Activated B cell treated with CpG ODN at 0.5 μM for 24 hours (primary cell): ENCODE measurements at regions of chr10 and their contacts with region 1.

Region 1: GRCh38 chr10:71835671-71836595 is 15.1 kb downstream of the PSAP start:
- DNase-seq: peak; percentile 84
- ATAC-seq: peak; percentile 92
- H3K4me3 Mint-ChIP-seq: peak overlapping the region; percentile 79
- H3K27ac Mint-ChIP-seq: peak overlapping the region; percentile 95
- H3K4me1 Mint-ChIP-seq: peaks cover 88% of the 10 kb centered on the region
- H3K27me3 Mint-ChIP-seq: no peaks in the 10 kb centered on the region
- CTCF ChIP-seq: no peak

Region 2: DNA sequence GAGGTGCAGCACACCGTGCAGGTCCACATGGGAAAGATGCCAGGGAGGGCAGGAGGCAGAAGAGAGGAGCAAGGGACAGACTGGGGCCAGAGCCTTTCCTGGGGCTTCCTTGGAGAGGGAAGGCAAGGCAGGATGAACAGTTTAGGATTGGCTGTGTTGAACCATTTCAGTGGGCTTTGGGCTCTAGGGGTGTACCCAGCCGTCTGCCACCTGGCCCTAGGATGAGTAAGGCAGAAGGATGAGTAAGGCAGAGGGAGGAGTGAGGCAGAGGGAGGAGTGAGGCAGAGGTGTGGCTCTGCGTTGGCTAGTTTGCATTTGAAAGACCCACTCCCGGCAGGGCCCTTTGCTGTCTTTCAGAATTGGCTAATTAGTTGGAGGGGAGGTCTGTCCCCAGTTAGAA is 1201.9 kb before region 1 on chr10:
- CTCF ChIA-PET with region 1: no interaction called
- POLR2A ChIA-PET with region 1: no interaction called
- intact Hi-C with region 1: no loop called
- DNase-seq: no peak
- ATAC-seq: no peak
- H3K4me3 Mint-ChIP-seq: no peak overlapping the region
- H3K27ac Mint-ChIP-seq: no peak overlapping the region
- H3K4me1 Mint-ChIP-seq: no peaks in the 10 kb centered on the region
- H3K27me3 Mint-ChIP-seq: peaks cover 4% of the 10 kb centered on the region
- CTCF ChIP-seq: no peak

Region 3: GRCh38 chr10:71371750-71372166 is 464.2 kb before region 1 on chr10:
- CTCF ChIA-PET with region 1: no interaction called
- POLR2A ChIA-PET with region 1: no interaction called
- intact Hi-C with region 1: loop called (anchors 5 kb)
- DNase-seq: no peak
- ATAC-seq: peak; percentile 43
- H3K4me3 Mint-ChIP-seq: peak overlapping the region; percentile 50
- H3K27ac Mint-ChIP-seq: peak overlapping the region; percentile 90
- H3K4me1 Mint-ChIP-seq: peaks cover 44% of the 10 kb centered on the region
- H3K27me3 Mint-ChIP-seq: no peaks in the 10 kb centered on the region
- CTCF ChIP-seq: no peak

Region 4: DNA sequence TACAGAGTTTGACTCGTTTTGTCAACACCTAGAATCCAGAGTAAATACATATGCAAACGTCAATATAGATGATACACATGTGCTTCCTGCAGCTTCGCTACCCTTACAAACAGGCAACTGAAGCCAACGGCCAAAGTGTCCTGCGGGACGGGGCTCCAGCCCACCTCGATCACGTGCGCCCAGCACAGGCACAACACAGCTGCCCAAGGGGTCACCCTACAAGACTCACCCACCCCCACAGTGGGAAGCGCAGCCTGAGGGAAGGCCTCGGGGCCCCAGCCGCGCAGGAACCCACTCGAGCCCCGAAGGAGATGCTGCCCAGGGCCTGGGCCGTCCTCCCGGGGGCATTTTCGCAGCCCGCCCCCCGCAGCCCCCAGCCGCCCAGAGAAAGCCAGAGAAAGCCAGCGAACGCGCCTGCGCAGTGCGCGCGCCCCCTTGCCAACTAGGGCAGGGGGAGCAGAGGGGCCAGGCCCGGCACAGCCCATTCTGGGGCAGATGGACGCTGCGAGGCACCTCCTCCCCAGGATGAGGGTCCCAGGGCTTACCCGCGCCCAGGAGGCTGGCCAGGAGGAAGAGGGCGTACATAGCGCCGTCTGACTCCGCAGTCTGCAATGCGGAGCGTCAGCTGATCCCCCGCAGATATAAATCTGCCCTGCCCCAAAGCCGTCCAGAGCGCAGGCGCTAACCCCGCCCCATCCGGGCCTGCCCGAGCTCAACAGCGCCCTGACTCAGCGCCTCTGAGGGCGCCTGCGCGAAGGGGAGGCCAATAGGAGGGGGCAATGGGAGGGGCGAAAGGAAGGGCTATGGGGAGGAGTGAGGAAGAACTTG is 14.9 kb after region 1 on chr10 and contains the start of gene PSAP:
- CTCF ChIA-PET with region 1: interaction called, 21 read pairs
- POLR2A ChIA-PET with region 1: interaction called, 125 read pairs
- intact Hi-C with region 1: loop called (anchors 1 kb)
- DNase-seq: peak; percentile 96
- ATAC-seq: peak; percentile 97
- H3K4me3 Mint-ChIP-seq: peak within 1 kb of the TSS; percentile 92
- H3K27ac Mint-ChIP-seq: peak within 1 kb of the TSS; percentile 83
- H3K4me1 Mint-ChIP-seq: peaks cover 63% of the 10 kb centered on the region
- H3K27me3 Mint-ChIP-seq: no peaks in the 10 kb centered on the region
- CTCF ChIP-seq: no peak
- total RNA-seq, gene PSAP: 207 and 210 TPM in 2 replicates

Region 5: GRCh38 chr10:71873582-71874211 is 37.8 kb after region 1 on chr10:
- CTCF ChIA-PET with region 1: interaction called, 5 read pairs
- POLR2A ChIA-PET with region 1: interaction called, 28 read pairs
- intact Hi-C with region 1: loop called (anchors 1 kb)
- DNase-seq: no peak
- ATAC-seq: peak; percentile 78
- H3K4me3 Mint-ChIP-seq: peak overlapping the region; percentile 58
- H3K27ac Mint-ChIP-seq: peak overlapping the region; percentile 61
- H3K4me1 Mint-ChIP-seq: peaks cover 46% of the 10 kb centered on the region
- H3K27me3 Mint-ChIP-seq: no peaks in the 10 kb centered on the region
- CTCF ChIP-seq: no peak

Region 6: DNA sequence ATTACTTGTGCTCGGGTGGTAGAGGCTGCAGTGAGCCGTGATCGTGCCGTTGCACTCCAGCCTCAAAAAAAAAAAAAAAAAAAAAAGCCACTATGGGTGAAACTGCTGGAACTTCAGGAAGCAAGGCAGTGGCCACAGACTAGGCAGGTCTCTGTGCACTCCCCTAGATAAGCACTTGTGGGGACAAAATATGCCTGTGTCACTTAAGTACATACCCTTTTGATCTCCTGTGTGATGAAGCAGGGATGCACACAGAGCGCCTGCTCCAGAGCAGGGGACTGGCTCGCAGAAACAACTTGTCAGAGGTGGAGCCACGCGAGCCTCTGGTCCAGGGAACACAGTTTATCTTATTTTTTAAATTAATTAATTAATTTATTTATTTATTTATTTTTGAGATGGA is 58.0 kb after region 1 on chr10:
- CTCF ChIA-PET with region 1: interaction called, 85 read pairs
- POLR2A ChIA-PET with region 1: interaction called, 22 read pairs
- intact Hi-C with region 1: loop called (anchors 1 kb)
- DNase-seq: no peak
- ATAC-seq: no peak
- H3K4me3 Mint-ChIP-seq: no peak overlapping the region
- H3K27ac Mint-ChIP-seq: no peak overlapping the region
- H3K4me1 Mint-ChIP-seq: peaks cover 20% of the 10 kb centered on the region
- H3K27me3 Mint-ChIP-seq: peaks cover 2% of the 10 kb centered on the region
- CTCF ChIP-seq: no peak

Region 7: DNA sequence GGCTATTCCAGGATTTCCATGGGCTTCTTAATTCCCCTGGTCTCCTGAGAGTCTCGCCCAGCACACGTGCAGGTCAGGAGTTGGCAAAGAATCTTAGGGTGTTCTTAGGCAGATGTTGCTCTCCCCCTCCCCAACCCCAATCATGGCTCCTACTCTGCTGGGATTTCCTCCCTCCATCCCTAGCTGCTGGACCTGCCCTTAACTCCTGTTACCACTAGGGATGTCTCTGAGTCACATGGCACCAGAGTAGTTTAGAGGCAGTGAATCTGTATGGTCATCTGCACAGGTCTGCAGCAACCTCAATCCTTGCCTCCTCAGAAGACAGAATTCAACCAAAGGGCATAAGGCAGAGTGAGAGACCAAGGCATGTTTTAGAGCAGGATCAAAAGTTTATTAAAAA is 76.5 kb after region 1 on chr10:
- CTCF ChIA-PET with region 1: no interaction called
- POLR2A ChIA-PET with region 1: no interaction called
- intact Hi-C with region 1: no loop called
- DNase-seq: no peak
- ATAC-seq: no peak
- H3K4me3 Mint-ChIP-seq: no peak overlapping the region
- H3K27ac Mint-ChIP-seq: no peak overlapping the region
- H3K4me1 Mint-ChIP-seq: peaks cover 21% of the 10 kb centered on the region
- H3K27me3 Mint-ChIP-seq: no peaks in the 10 kb centered on the region
- CTCF ChIP-seq: no peak

Region 8: GRCh38 chr10:72242675-72243074 is 406.7 kb after region 1 on chr10:
- CTCF ChIA-PET with region 1: no interaction called
- POLR2A ChIA-PET with region 1: no interaction called
- intact Hi-C with region 1: no loop called
- DNase-seq: no peak
- ATAC-seq: peak; percentile 47
- H3K4me3 Mint-ChIP-seq: peak overlapping the region; percentile 13
- H3K27ac Mint-ChIP-seq: peak overlapping the region; percentile 37
- H3K4me1 Mint-ChIP-seq: peaks cover 72% of the 10 kb centered on the region
- H3K27me3 Mint-ChIP-seq: no peaks in the 10 kb centered on the region
- CTCF ChIP-seq: no peak